H1 (cell line): ENCODE measurements at regions of chr20 and their contacts with region 1.

Region 1: GRCh38 chr20:49256261-49256660 is 21.6 kb downstream of the ZNFX1 start:
- DNase-seq: no peak
- H3K4me3 ChIP-seq: no peak overlapping the region
- H3K27ac ChIP-seq: no peak overlapping the region
- H3K4me1 ChIP-seq: no peaks in the 10 kb centered on the region
- H3K27me3 ChIP-seq: no peaks in the 10 kb centered on the region
- CTCF ChIP-seq: no peak
- EP300 ChIP-seq: no peak
- POLR2A ChIP-seq: no peak
- RAD21 ChIP-seq: no peak

Region 2: GRCh38 chr20:49278036-49278817 is 22.0 kb after region 1 on chr20 and contains the start of gene ZNFX1:
- CTCF ChIA-PET with region 1: no interaction called
- POLR2A ChIA-PET with region 1: interaction called, 25 read pairs
- DNase-seq: peak; percentile 97 to 98
- H3K4me3 ChIP-seq: peak within 1 kb of the TSS; percentile 73 to 97 (median 92)
- H3K27ac ChIP-seq: peak within 1 kb of the TSS; percentile 94
- H3K4me1 ChIP-seq: peaks cover 0 to 8% (median 5%) of the 10 kb centered on the region in 4 experiments; a peak in 3 of 7 replicates
- H3K27me3 ChIP-seq: peaks cover 0 to 1% (median 0%) of the 10 kb centered on the region in 4 experiments; a peak in 1 of 7 replicates
- CTCF ChIP-seq: 0 out of 4 replicates have a peak, but pooled peaks of 1 of the 3 experiments have one; percentile 5
- EP300 ChIP-seq: no peak
- POLR2A ChIP-seq: peak; percentile 100
- RAD21 ChIP-seq: no peak
- total RNA-seq, gene ZNFX1: 11.3 and 13.0 TPM in 2 replicates

Region 3: DNA sequence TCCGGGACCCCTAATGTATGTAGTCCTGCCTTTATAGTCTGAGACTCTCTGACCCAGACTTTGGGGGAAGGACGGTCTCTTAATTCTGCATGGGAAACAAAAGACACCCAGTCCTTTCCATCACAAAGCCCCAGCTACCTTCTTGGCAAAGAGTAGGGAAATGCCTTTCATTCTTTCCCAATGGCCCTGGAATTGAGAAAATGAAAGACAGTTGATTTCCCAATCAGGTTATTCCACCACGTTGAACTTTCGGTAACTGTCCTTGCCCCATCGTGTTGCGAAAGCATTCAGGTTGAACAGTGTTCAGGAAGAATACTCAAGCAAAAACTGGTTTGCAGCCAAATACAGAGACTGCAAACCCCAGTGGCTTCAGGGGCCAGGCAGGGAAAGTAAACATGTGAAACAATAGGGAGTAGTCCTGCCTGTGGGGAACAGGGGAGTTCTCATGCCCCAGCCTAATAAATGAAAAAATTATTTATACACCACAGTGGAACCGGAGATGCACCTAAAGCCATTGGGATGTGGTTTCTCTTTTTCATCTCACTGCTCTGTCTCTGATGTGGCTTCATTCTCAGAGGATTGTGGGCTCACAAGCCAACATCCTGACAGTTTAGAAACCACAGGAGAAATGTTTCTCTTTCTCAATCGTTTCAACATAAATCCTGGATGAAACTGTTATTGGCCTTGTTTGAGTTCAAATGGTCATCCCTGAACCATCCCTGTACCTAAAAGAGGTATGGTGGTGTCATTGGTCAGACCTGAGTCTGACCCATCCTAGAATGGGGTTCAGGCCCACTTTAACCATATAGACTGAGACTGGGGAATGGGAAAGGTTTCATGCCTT is 512.2 kb after region 1 on chr20:
- CTCF ChIA-PET with region 1: no interaction called
- POLR2A ChIA-PET with region 1: no interaction called
- DNase-seq: peak; percentile 57 to 59
- H3K4me3 ChIP-seq: peak overlapping the region in 1 of 4 experiments; percentile 29; a peak in 1 of 8 replicates
- H3K27ac ChIP-seq: peak overlapping the region; percentile 79
- H3K4me1 ChIP-seq: peaks cover 7 to 23% (median 14%) of the 10 kb centered on the region in 4 experiments
- H3K27me3 ChIP-seq: no peaks in the 10 kb centered on the region
- CTCF ChIP-seq: no peak
- EP300 ChIP-seq: no peak
- POLR2A ChIP-seq: no peak
- RAD21 ChIP-seq: no peak; a peak in 1 of 4 replicates